Dorsolateral prefrontal cortex (tissue), 120 donors: ENCODE measurements at regions of chr2 and their contacts with region 1.

Region 1: GRCh38 chr2:139790807-139791752 is 1010.9 kb upstream of the NXPH2 start:
- DNase-seq: no peak
- H3K4me3 ChIP-seq: no peak overlapping the region
- H3K27ac ChIP-seq: no peak overlapping the region
- H3K27me3 ChIP-seq: no peaks in the 10 kb centered on the region
- CTCF ChIP-seq: peak in 55 of 56 donors; percentile 27 to 78 (median 51)

Region 2: GRCh38 chr2:140863713-140864112 is 1072.6 kb after region 1 on chr2:
- intact Hi-C with region 1: loop called in 1 of 2 experiments (anchors 5 kb)
- DNase-seq: no peak
- H3K4me3 ChIP-seq: no peak overlapping the region
- H3K27ac ChIP-seq: no peak overlapping the region
- H3K27me3 ChIP-seq: no peaks in the 10 kb centered on the region
- CTCF ChIP-seq: peak; percentile 37 to 76 (median 62)